Left colon (tissue), 2 donors: ENCODE measurements at regions of chr19 and their contacts with region 1.

Region 1: DNA sequence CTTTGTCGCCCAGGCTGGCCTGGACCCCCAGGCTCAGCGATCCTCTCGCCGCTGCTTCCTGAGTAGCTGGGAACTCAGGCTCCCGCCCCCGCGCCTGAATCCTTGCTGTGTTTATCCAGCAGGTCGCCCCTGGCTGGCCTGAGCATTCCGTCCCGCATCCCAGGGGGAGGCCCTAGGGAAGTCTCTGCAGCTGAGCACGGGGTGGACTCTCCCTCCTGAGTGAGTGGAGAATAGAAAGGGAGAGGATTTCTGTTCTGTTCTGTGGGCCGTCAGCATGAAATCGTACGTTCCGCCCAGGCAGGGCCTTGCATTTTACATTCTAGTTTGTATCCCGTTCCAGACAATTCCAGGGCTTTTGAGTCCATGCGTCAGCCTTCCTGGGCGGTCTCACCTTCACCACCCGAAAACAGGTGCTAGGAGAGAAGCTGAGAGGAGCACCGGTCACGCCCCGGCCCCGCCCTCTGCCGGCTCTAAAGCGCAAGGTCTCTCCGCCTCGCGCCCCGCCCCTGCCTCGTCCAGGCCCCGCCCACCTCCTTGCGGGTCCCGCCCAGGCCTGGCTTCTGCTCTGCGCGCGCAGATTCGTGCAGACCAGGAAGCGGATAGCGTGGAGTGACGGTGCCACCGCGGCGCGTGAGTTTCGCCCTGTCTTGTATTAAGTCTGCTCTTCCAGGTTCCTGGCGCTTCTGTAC is at the start of gene ZNF761:
- DNase-seq: peak; percentile 96 to 99
- ATAC-seq: peak; percentile 99
- total RNA-seq, gene ZNF761: 7.7 to 7.8 TPM

Region 2: GRCh38 chr19:53511933-53512374 is 80.4 kb after region 1 on chr19:
- intact Hi-C with region 1: loop called in 1 of 2 experiments (anchors 10 kb)
- DNase-seq: peak; percentile 30 to 52
- ATAC-seq: peak; percentile 75